CD4-positive, alpha-beta memory T cell (primary cell): ENCODE measurements at regions of chr21 and their contacts with region 1.

Region 1: DNA sequence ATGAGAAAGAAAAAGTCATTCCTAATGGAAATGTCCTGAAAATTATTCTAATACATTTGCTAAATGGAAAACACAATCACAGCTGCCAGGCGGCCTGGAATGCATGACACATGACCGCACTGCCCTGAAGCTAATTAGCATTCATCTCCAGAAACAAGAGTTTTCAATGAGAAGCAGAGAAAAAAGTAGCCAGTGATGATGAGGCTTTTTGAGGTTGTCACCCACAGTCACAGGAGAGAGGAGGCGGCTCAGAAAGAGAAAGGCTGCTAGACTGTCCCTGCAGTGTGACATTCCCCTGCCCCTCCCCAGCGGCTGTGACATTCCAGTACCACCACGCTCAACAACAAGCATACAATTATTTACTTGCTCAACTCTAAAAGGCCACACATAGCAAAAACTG is 122.9 kb upstream of the KRTAP19-8 start:
- DNase-seq: no peak
- H3K4me3 ChIP-seq: no peak overlapping the region
- H3K4me3 Mint-ChIP-seq: peak overlapping the region; percentile 56 to 84 (median 72)
- H3K27ac ChIP-seq: no peak overlapping the region
- H3K27ac Mint-ChIP-seq: peak overlapping the region; percentile 73 to 96 (median 86)
- H3K4me1 ChIP-seq: peaks cover 87% of the 10 kb centered on the region
- H3K4me1 Mint-ChIP-seq: peaks cover 48 to 82% (median 70%) of the 10 kb centered on the region in 4 donors
- H3K27me3 ChIP-seq: no peaks in the 10 kb centered on the region
- H3K27me3 Mint-ChIP-seq: no peaks in the 10 kb centered on the region

Region 2: DNA sequence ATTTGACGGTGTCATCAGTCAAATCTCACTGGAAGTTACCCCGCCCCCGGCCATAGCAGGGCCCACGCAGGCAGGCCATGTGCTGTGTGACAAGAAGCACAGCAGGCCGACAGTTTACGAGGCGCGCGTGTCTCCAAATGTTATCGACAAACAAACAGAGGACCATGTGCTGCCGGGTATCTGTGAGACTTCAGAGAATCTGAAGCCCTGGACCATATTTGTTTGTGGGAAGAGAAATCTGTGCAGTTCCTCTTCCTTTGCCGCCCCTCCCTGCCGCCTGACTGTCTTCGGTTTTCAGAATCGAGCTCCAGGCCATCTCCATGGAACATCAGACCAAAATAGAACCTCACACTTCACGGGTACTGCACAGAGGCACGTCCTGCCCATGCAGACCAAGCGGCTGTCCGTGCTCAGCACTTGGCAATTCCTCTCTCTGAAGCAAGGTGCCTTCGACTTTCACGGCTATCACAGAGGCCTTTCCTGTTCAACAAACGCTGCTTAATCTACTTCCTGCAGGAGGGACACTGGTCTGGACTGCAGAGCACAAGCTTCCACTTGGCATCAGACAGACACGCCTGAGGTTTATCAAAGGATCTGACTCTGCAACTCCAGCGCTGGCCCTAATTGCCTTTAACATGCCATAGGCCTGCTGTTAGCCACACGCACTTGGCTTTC is 12.9 kb after region 1 on chr21:
- CTCF ChIA-PET with region 1: interaction called, 80 read pairs
- POLR2A ChIA-PET with region 1: interaction called, 11 read pairs
- intact Hi-C with region 1: loop called (anchors 1 kb)
- DNase-seq: peak in 3 of 5 donors; percentile 27 to 70 (median 44)
- H3K4me3 ChIP-seq: no peak overlapping the region
- H3K4me3 Mint-ChIP-seq: peak overlapping the region; percentile 66 to 88 (median 80)
- H3K27ac ChIP-seq: peak overlapping the region; percentile 38
- H3K27ac Mint-ChIP-seq: peak overlapping the region; percentile 81 to 93 (median 90)
- H3K4me1 ChIP-seq: peaks cover 90% of the 10 kb centered on the region
- H3K4me1 Mint-ChIP-seq: peaks cover 55 to 96% (median 79%) of the 10 kb centered on the region in 4 donors
- H3K27me3 ChIP-seq: no peaks in the 10 kb centered on the region
- H3K27me3 Mint-ChIP-seq: no peaks in the 10 kb centered on the region